ENCODE measurements at regions of chr19 and their contacts with region 1.

Region 1: GRCh38 chr19:14405758-14406644 is 13.1 kb downstream of the DDX39A start:
- DNase-seq: peak; percentile 92 to 94
- ATAC-seq: peak; percentile 64 to 86 (median 71)
- H3K4me3 ChIP-seq: no peak overlapping the region
- H3K4me3 Mint-ChIP-seq: peak overlapping the region; percentile 82
- H3K27ac ChIP-seq: peak overlapping the region; percentile 65
- H3K27ac Mint-ChIP-seq: peak overlapping the region; percentile 92
- H3K4me1 ChIP-seq: peaks cover 59% of the 10 kb centered on the region
- H3K4me1 Mint-ChIP-seq: peaks cover 45 to 71% of the 10 kb centered on the region in 2 donors
- H3K27me3 ChIP-seq: no peaks in the 10 kb centered on the region
- H3K27me3 Mint-ChIP-seq: no peaks in the 10 kb centered on the region
- CTCF ChIP-seq: peak; percentile 98

Region 2: DNA sequence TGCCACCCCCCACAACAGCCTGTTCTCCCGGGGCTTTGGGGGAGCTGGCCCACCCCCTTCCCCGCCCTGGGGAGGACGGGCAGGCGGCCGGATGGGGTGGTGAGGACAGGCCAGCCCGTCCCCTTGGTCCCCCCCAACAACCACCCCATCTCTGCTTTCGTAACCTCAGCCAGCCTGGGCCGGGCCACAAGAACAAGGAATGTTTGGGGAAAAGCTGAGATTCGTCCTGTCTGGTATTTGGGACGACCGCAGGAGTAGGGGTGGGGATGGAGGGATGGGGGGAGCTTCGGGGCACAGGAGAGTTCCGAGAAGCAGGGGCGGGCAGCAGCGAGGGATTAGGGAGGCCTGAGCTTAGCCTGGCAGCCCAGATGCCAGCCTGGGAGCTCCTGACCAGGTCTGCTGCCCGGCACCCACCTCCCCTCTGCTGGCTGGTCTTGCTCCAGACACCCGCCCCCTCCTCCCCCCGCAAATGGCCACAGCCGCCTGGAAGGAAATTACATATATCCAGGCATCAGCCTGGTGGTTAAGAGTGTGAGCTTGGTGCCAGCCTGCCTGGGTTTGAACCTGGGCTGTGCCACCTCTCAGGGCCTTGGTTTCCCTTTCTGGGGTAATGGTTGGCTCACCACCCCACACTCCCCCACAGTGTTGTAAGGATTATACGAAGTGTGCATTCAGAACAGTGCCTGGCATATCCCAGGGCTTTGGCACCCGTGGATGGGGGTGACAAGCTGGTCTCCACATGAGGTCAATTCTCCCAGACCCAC is 467.5 kb before region 1 on chr19 and contains the start of gene PODNL1:
- intact Hi-C with region 1: no loop called
- DNase-seq: no peak
- ATAC-seq: peak in 2 of 3 donors; percentile 24 to 73
- H3K4me3 ChIP-seq: no peak within 1 kb of the TSS
- H3K4me3 Mint-ChIP-seq: no peak within 1 kb of the TSS
- H3K27ac ChIP-seq: no peak within 1 kb of the TSS
- H3K27ac Mint-ChIP-seq: no peak within 1 kb of the TSS
- H3K4me1 ChIP-seq: peaks cover 11% of the 10 kb centered on the region
- H3K4me1 Mint-ChIP-seq: peaks cover 0 to 6% of the 10 kb centered on the region in 2 donors
- H3K27me3 ChIP-seq: peaks cover 9% of the 10 kb centered on the region
- H3K27me3 Mint-ChIP-seq: peaks cover 0 to 13% of the 10 kb centered on the region in 2 donors
- CTCF ChIP-seq: no peak
- total RNA-seq, gene PODNL1: 0.61 TPM in 1 of 3 donors, not detected in the others

Region 3: DNA sequence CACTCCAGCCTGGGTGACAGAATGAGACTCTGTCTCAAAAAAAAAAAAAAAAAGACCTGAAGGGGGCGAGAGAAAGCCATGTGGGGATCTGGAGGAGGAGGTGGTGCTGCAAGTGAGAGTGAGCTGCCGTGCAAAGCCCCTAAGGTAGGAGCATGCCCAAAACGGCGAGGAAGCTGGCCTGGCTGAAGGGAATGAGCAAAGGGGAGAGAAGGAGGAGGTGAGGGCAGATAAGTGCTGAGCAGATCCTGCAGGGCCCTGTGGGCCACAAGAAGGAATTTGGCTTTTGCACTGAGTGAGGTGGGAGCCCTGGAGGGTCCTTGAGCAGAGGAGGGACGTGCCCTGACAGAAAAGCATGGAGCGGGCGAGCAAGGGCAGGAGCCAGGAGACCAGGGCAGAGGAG is 44.2 kb before region 1 on chr19:
- intact Hi-C with region 1: loop called (anchors 1 kb)
- DNase-seq: peak in 1 of 2 donors; percentile 80
- ATAC-seq: peak; percentile 54 to 71 (median 56)
- H3K4me3 ChIP-seq: no peak overlapping the region
- H3K4me3 Mint-ChIP-seq: peak overlapping the region; percentile 89
- H3K27ac ChIP-seq: peak overlapping the region; percentile 41
- H3K27ac Mint-ChIP-seq: peak overlapping the region; percentile 86 to 95
- H3K4me1 ChIP-seq: peaks cover 62% of the 10 kb centered on the region
- H3K4me1 Mint-ChIP-seq: peaks cover 32 to 42% of the 10 kb centered on the region in 2 donors
- H3K27me3 ChIP-seq: no peaks in the 10 kb centered on the region
- H3K27me3 Mint-ChIP-seq: no peaks in the 10 kb centered on the region
- CTCF ChIP-seq: peak; percentile 38

Region 4: GRCh38 chr19:14369399-14370168 is 36.4 kb before region 1 on chr19:
- intact Hi-C with region 1: loop called (anchors 2 kb)
- DNase-seq: peak; percentile 83 to 96
- ATAC-seq: peak; percentile 62 to 85 (median 77)
- H3K4me3 ChIP-seq: peak overlapping the region; percentile 41
- H3K4me3 Mint-ChIP-seq: peak overlapping the region; percentile 91
- H3K27ac ChIP-seq: peak overlapping the region; percentile 99
- H3K27ac Mint-ChIP-seq: peak overlapping the region; percentile 90 to 100
- H3K4me1 ChIP-seq: peaks cover 98% of the 10 kb centered on the region
- H3K4me1 Mint-ChIP-seq: peaks cover 58 to 69% of the 10 kb centered on the region in 2 donors
- H3K27me3 ChIP-seq: no peaks in the 10 kb centered on the region
- H3K27me3 Mint-ChIP-seq: no peaks in the 10 kb centered on the region
- CTCF ChIP-seq: no peak

Region 5: DNA sequence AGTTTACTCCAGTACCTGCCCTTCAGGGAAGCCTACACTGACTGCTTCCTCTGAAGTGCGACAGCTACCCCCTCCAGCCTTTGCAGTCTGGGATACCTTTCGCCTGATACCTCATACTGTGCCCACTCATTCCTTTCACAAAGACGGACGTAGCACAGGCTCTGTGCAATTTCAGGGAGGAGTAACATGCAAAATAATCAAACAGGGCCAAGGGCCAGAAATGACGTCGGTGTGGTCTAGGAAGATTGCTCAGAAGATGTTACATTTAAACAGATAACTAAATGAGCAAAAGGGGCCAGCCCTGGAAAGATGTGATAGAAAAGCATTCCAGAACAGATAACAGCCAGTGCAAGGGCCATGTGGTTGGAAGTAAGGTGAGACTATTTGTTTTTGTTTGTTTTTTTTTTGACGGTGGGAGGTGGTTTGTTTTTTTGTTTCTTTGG is 19.7 kb after region 1 on chr19:
- intact Hi-C with region 1: no loop called
- DNase-seq: no peak
- ATAC-seq: no peak
- H3K4me3 ChIP-seq: no peak overlapping the region
- H3K4me3 Mint-ChIP-seq: no peak overlapping the region
- H3K27ac ChIP-seq: no peak overlapping the region
- H3K27ac Mint-ChIP-seq: no peak overlapping the region
- H3K4me1 ChIP-seq: no peaks in the 10 kb centered on the region
- H3K4me1 Mint-ChIP-seq: peaks cover 0 to 4% of the 10 kb centered on the region in 2 donors
- H3K27me3 ChIP-seq: no peaks in the 10 kb centered on the region
- H3K27me3 Mint-ChIP-seq: no peaks in the 10 kb centered on the region
- CTCF ChIP-seq: no peak

Measured in natural killer cell (primary cell).